ENCODE measurements at regions of chr3 and their contacts with region 1.

Region 1: GRCh38 chr3:10205451-10206165 is 40.9 kb downstream of the IRAK2 start:
- DNase-seq: peak; percentile 95
- ATAC-seq: peak; percentile 87
- H3K4me3 ChIP-seq: no peak overlapping the region
- H3K27ac ChIP-seq: peak overlapping the region; percentile 92
- H3K4me1 ChIP-seq: peaks cover 22% of the 10 kb centered on the region
- H3K27me3 ChIP-seq: no peaks in the 10 kb centered on the region
- CTCF ChIP-seq: peak; percentile 23; the same call in 1 of the 2 replicates
- POLR2A ChIP-seq: peak; percentile 76
- RAD21 ChIP-seq: peak; percentile 19; the same call in 1 of the 2 replicates

Region 2: GRCh38 chr3:10192953-10193691 is 12.5 kb before region 1 on chr3:
- CTCF ChIA-PET with region 1: interaction called, 31 read pairs
- POLR2A ChIA-PET with region 1: no interaction called
- dilution Hi-C with region 1: no loop called
- in situ Hi-C with region 1: no loop called
- intact Hi-C with region 1: no loop called
- DNase-seq: peak; percentile 96
- ATAC-seq: peak; percentile 58
- H3K4me3 ChIP-seq: no peak overlapping the region
- H3K27ac ChIP-seq: peak overlapping the region; percentile 73
- H3K4me1 ChIP-seq: peaks cover 38% of the 10 kb centered on the region
- H3K27me3 ChIP-seq: no peaks in the 10 kb centered on the region
- CTCF ChIP-seq: peak; percentile 77
- POLR2A ChIP-seq: no peak
- RAD21 ChIP-seq: peak; percentile 56

Measured in IMR-90 (cell line).